Natural killer cell (primary cell): ENCODE measurements at regions of chr2 and their contacts with region 1.

Region 1: DNA sequence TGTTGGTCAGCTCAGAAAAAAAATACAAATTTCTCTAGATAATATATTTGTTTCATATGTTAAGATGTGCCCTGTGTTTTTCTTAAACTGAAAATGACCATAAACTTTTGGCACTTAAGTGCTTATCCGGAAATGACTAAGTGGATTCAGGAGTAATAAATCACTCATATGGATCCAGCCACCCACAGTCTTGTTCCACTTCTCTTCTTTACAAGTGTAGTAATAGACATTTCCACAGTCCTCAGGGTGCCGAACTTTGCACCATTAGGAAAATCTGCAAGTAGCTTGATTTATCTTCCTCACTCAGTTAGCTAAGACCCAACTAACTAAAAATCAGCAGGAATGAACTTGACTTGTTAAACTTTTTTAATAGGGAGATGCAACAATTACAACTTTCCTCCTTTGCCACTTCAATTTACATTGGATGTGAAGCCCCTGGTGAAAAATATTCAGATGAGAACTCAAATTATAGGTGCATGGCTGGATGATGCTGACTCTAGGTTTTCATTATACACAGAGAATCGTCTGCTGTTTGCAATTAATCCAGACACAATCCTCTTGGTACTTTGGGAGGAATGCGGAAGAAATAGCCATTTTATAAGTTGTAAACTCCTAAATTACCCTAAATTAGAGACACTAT is 322.5 kb downstream of the ARHGAP15 start:
- DNase-seq: no peak
- ATAC-seq: no peak
- H3K4me3 ChIP-seq: no peak overlapping the region
- H3K4me3 Mint-ChIP-seq: no peak overlapping the region
- H3K27ac ChIP-seq: no peak overlapping the region
- H3K27ac Mint-ChIP-seq: no peak overlapping the region
- H3K4me1 ChIP-seq: peaks cover 6% of the 10 kb centered on the region
- H3K4me1 Mint-ChIP-seq: peaks cover 53% of the 10 kb centered on the region in 2 donors
- H3K27me3 ChIP-seq: no peaks in the 10 kb centered on the region
- H3K27me3 Mint-ChIP-seq: no peaks in the 10 kb centered on the region
- CTCF ChIP-seq: no peak

Region 2: GRCh38 chr2:143334719-143335236 is 117.0 kb before region 1 on chr2:
- intact Hi-C with region 1: loop called (anchors 5 kb)
- DNase-seq: no peak
- ATAC-seq: no peak
- H3K4me3 ChIP-seq: no peak overlapping the region
- H3K4me3 Mint-ChIP-seq: no peak overlapping the region
- H3K27ac ChIP-seq: no peak overlapping the region
- H3K27ac Mint-ChIP-seq: no peak overlapping the region
- H3K4me1 ChIP-seq: peaks cover 6% of the 10 kb centered on the region
- H3K4me1 Mint-ChIP-seq: peaks cover 59 to 63% of the 10 kb centered on the region in 2 donors
- H3K27me3 ChIP-seq: no peaks in the 10 kb centered on the region
- H3K27me3 Mint-ChIP-seq: no peaks in the 10 kb centered on the region
- CTCF ChIP-seq: no peak

Region 3: GRCh38 chr2:145258903-145259579 is 1807.3 kb after region 1 on chr2:
- intact Hi-C with region 1: loop called (anchors 2 kb)
- DNase-seq: peak; percentile 18 to 53
- ATAC-seq: peak; percentile 89 to 98 (median 90)
- H3K4me3 ChIP-seq: no peak overlapping the region
- H3K4me3 Mint-ChIP-seq: peak overlapping the region; percentile 67
- H3K27ac ChIP-seq: no peak overlapping the region
- H3K27ac Mint-ChIP-seq: peak overlapping the region; percentile 13 to 14
- H3K4me1 ChIP-seq: no peaks in the 10 kb centered on the region
- H3K4me1 Mint-ChIP-seq: peaks cover 24 to 25% of the 10 kb centered on the region in 2 donors
- H3K27me3 ChIP-seq: peaks cover 60% of the 10 kb centered on the region
- H3K27me3 Mint-ChIP-seq: peaks cover 51 to 62% of the 10 kb centered on the region in 2 donors
- CTCF ChIP-seq: no peak